ENCODE measurements at regions of chr5 and their contacts with region 1.

Region 1: DNA sequence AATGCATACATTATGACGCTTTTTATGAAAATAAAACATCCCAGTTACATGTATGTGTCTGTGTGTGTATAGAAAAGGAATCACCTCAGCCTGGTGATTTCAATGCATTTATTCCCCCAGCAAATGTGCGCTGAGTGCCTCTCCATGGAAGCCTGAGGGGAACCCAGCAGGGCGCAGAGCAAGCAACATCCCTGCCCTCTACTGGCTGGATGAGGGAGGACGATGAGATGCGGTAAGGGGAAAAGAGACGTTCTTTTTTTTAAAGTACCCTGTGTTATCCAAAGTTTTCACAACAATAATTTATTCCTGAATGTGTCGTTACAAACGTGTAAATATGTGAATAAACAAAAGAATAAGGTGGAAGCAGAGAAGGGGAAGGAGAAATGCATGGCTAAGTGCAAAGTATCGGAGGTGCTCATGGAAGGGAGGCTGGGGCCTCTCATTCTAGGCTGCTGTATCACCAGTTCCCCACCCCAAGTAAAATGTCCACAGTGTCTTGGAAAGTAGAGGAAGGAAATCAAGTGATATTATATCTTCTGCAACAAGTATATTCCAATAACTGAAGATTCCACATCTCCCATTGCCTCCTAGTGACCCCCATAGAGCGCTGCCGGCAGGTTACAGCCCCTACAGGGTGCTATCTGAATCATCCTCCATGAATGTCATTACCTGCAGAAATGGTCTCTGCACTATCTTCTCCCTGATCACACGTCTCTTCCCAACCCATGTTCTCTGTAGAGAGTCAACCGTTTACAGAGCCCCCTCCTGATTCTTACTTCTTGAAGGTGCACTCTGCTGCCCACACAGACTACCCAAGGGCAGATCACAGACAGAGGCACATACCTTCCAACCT is 13.0 kb upstream of the ABLIM3 start:
- DNase-seq: peak; percentile 48 to 54
- H3K4me3 ChIP-seq: no peak overlapping the region
- H3K4me3 Mint-ChIP-seq: no peak overlapping the region
- H3K27ac Mint-ChIP-seq: no peak overlapping the region
- H3K4me1 ChIP-seq: no peaks in the 10 kb centered on the region
- H3K4me1 Mint-ChIP-seq: peaks cover 30% of the 10 kb centered on the region
- H3K27me3 ChIP-seq: no peaks in the 10 kb centered on the region
- H3K27me3 Mint-ChIP-seq: peaks cover 6% of the 10 kb centered on the region
- CTCF ChIP-seq: peak; percentile 63 to 88

Region 2: GRCh38 chr5:149079883-149080282 is 48.4 kb before region 1 on chr5:
- CTCF ChIA-PET with region 1: no interaction called
- POLR2A ChIA-PET with region 1: no interaction called
- intact Hi-C with region 1: no loop called
- DNase-seq: no peak
- H3K4me3 ChIP-seq: no peak overlapping the region
- H3K4me3 Mint-ChIP-seq: no peak overlapping the region
- H3K27ac Mint-ChIP-seq: no peak overlapping the region
- H3K4me1 ChIP-seq: no peaks in the 10 kb centered on the region
- H3K4me1 Mint-ChIP-seq: no peaks in the 10 kb centered on the region
- H3K27me3 ChIP-seq: no peaks in the 10 kb centered on the region
- H3K27me3 Mint-ChIP-seq: peaks cover 14% of the 10 kb centered on the region
- CTCF ChIP-seq: no peak

Region 3: DNA sequence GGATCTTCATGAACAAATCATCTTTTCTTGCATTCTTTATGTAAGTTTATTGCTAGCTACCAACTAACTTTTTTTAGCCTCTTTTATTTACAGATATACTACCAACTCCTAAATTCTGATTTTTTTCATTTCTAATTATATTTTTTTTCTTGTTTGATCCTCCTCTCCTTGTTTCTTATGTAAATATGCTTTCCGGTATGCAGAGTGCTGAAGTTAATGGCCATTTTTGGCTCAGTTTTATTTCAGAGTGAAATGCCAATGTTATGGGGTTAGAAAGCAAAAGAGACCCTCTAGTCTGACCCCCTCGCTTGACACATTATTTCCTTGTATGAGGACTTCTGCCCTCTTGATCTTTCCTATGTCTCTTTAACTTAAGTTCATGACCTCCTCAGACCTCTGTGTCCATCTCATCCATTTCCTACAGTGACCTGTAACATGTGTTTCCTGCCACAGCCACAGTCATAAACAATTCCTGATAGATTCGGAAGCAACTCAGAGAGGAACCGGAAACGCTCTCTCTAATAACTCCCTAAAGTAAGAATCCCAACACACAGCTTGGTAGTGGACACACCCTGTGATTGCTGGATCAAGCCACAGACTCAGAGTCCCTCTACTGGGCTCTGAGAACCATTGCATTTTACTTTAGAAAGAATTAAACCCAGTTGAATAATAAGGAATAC is 100.5 kb after region 1 on chr5:
- CTCF ChIA-PET with region 1: interaction called, 8 read pairs
- POLR2A ChIA-PET with region 1: no interaction called
- intact Hi-C with region 1: loop called (anchors 2 kb)
- DNase-seq: peak in 1 of 2 experiments; percentile 16
- H3K4me3 ChIP-seq: no peak overlapping the region
- H3K4me3 Mint-ChIP-seq: no peak overlapping the region
- H3K27ac Mint-ChIP-seq: no peak overlapping the region
- H3K4me1 ChIP-seq: no peaks in the 10 kb centered on the region
- H3K4me1 Mint-ChIP-seq: peaks cover 6% of the 10 kb centered on the region
- H3K27me3 ChIP-seq: no peaks in the 10 kb centered on the region; the same call in 1 of the 2 replicates
- H3K27me3 Mint-ChIP-seq: peaks cover 22% of the 10 kb centered on the region
- CTCF ChIP-seq: peak; percentile 59 to 60

Measured in Caco-2 (cell line).